ENCODE measurements at regions of chr5 and their contacts with region 1.

Region 1: GRCh38 chr5:124706729-124707361 is 39.6 kb downstream of the ZNF608 start:
- DNase-seq: no peak
- ATAC-seq: no peak
- H3K4me3 ChIP-seq: peak overlapping the region; percentile 16; the same call in 1 of the 2 replicates
- H3K27ac ChIP-seq: peak overlapping the region; percentile 78
- H3K4me1 ChIP-seq: peaks cover 61% of the 10 kb centered on the region
- H3K27me3 ChIP-seq: no peaks in the 10 kb centered on the region
- CTCF ChIP-seq: no peak
- EP300 ChIP-seq: no peak
- POLR2A ChIP-seq: no peak
- RAD21 ChIP-seq: no peak

Region 2: DNA sequence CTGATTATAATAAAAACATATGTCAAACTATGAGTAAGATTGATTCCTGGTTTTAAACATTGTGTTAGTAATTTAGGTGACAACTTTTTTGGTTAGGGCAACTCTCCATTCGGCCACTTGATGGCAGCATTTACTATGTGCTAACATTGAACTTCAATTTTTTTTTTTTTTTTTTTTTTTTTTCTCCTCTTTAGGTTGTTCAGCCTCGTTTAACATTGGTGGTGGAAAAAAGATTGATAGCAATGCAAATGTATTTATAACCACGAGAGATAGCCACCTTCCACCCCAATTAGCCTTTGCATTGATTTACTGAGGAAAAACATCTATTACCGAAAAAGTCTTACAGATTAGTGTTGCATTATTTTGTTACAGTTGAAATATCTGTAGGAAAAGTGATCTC is 1035.8 kb before region 1 on chr5:
- CTCF ChIA-PET with region 1: no interaction called
- POLR2A ChIA-PET with region 1: no interaction called
- RAD21 ChIA-PET with region 1: no interaction called
- SMC1A ChIA-PET with region 1: no interaction called
- in situ Hi-C with region 1: loop called (anchors 25 kb)
- intact Hi-C with region 1: no loop called
- DNase-seq: no peak
- ATAC-seq: peak; percentile 27; the same call in 2 of the 3 replicates
- H3K4me3 ChIP-seq: no peak overlapping the region
- H3K27ac ChIP-seq: no peak overlapping the region
- H3K4me1 ChIP-seq: no peaks in the 10 kb centered on the region
- H3K27me3 ChIP-seq: no peaks in the 10 kb centered on the region
- CTCF ChIP-seq: peak; percentile 71 to 74 (median 72)
- EP300 ChIP-seq: no peak
- POLR2A ChIP-seq: no peak
- RAD21 ChIP-seq: peak; percentile 89

Region 3: DNA sequence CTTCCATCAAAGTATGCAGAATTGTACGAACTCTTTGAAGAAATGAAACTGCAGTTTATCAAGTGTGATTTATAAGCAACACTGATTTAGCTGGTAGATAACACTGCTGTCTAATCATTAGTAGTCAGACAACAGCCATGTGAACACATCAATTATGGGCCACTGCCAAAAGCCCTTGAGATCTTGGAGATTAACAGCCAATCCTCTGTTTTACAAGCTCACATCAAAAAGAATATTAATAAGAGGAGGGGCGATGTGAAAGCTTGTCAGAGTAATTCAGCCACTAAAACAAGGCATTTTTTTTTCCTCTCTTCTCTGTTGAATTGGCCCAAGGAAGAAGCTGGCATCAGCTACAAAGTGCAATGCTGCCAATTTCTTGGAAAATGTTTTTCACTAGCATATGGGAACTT is 11.5 kb after region 1 on chr5:
- CTCF ChIA-PET with region 1: interaction called, 3 read pairs
- POLR2A ChIA-PET with region 1: interaction called, 3 read pairs
- RAD21 ChIA-PET with region 1: interaction called, 6 read pairs
- SMC1A ChIA-PET with region 1: interaction called, 42 read pairs
- in situ Hi-C with region 1: no loop called
- intact Hi-C with region 1: no loop called
- DNase-seq: no peak
- ATAC-seq: no peak
- H3K4me3 ChIP-seq: no peak overlapping the region
- H3K27ac ChIP-seq: no peak overlapping the region
- H3K4me1 ChIP-seq: no peaks in the 10 kb centered on the region
- H3K27me3 ChIP-seq: no peaks in the 10 kb centered on the region
- CTCF ChIP-seq: no peak
- EP300 ChIP-seq: no peak
- POLR2A ChIP-seq: no peak
- RAD21 ChIP-seq: no peak

Region 4: DNA sequence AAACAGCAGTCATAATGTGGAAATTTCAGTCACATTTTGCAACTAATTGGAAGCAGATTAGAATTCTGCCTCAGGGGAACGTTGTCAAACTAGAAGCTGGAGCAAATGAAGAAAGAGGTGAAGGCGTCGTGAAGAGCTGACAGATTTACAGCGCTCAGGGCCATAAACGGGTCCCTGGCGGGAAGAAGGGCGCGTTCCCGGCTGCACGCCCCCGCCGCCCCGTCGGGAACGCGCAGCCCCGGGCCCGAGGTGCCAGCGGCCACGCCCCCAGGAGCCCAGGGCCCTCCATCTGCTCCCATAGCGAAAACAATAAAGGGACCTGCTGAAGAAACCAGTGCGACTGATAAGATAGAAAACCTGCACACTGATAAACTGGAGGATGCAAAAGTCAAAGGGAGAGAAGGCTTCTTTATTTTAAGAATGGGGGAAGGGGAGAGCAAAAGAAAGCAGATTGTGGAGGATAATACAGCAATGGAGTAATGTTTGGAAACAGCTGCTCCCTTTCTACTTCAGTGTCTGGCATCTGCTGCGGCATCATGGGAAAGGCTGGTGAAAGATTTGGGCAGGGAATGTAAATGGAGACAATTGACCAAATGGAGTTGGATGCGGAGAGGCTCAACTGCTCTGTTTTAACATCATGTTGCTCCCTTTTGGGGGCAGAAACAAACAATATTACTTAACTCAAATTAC is 28.5 kb after region 1 on chr5:
- CTCF ChIA-PET with region 1: interaction called, 13 read pairs
- POLR2A ChIA-PET with region 1: interaction called, 6 read pairs
- RAD21 ChIA-PET with region 1: interaction called, 42 read pairs
- SMC1A ChIA-PET with region 1: interaction called, 13 read pairs
- in situ Hi-C with region 1: no loop called
- intact Hi-C with region 1: no loop called
- DNase-seq: no peak
- ATAC-seq: no peak
- H3K4me3 ChIP-seq: peak overlapping the region; percentile 9; the same call in 1 of the 2 replicates
- H3K27ac ChIP-seq: no peak overlapping the region
- H3K4me1 ChIP-seq: peaks cover 9% of the 10 kb centered on the region
- H3K27me3 ChIP-seq: no peaks in the 10 kb centered on the region
- CTCF ChIP-seq: no peak
- EP300 ChIP-seq: no peak
- POLR2A ChIP-seq: no peak
- RAD21 ChIP-seq: no peak

Region 5: GRCh38 chr5:124773315-124774311 is 66.8 kb after region 1 on chr5:
- CTCF ChIA-PET with region 1: no interaction called
- POLR2A ChIA-PET with region 1: no interaction called
- RAD21 ChIA-PET with region 1: no interaction called
- SMC1A ChIA-PET with region 1: no interaction called
- in situ Hi-C with region 1: no loop called
- intact Hi-C with region 1: no loop called
- DNase-seq: no peak
- ATAC-seq: no peak
- H3K4me3 ChIP-seq: no peak overlapping the region
- H3K27ac ChIP-seq: no peak overlapping the region
- H3K4me1 ChIP-seq: no peaks in the 10 kb centered on the region
- H3K27me3 ChIP-seq: no peaks in the 10 kb centered on the region
- CTCF ChIP-seq: no peak
- EP300 ChIP-seq: no peak
- POLR2A ChIP-seq: no peak
- RAD21 ChIP-seq: no peak

Region 6: DNA sequence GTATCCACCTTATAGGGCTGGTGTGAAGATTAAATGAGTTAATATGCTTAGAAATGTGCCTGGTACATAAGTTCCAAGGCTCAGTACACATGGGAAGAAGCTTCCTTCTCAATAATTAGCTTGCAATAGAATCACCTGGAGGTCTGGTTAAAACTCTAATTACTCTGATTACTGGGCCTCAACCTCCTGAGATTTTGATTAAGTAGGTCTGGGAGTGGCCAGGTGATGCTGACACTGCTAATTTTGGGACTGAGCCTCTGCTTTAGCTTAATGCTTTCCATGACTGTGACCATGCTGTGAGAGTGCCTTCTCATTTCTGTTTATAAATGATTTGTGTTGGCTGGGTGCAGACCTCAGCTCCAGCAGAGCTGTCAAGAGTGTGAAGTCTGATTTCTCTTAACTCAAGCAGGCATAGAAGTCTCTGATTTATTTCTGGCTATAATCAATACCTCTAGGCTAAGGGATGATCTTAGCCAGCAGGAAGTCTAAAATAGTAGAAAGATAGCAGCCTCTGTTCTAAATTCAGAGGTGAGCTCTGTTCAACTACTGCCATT is 124.9 kb after region 1 on chr5:
- CTCF ChIA-PET with region 1: no interaction called
- POLR2A ChIA-PET with region 1: no interaction called
- RAD21 ChIA-PET with region 1: no interaction called
- SMC1A ChIA-PET with region 1: no interaction called
- in situ Hi-C with region 1: no loop called
- intact Hi-C with region 1: no loop called
- DNase-seq: no peak
- ATAC-seq: no peak
- H3K4me3 ChIP-seq: no peak overlapping the region
- H3K27ac ChIP-seq: no peak overlapping the region
- H3K4me1 ChIP-seq: no peaks in the 10 kb centered on the region
- H3K27me3 ChIP-seq: no peaks in the 10 kb centered on the region
- CTCF ChIP-seq: no peak
- EP300 ChIP-seq: no peak
- POLR2A ChIP-seq: no peak
- RAD21 ChIP-seq: no peak

Region 7: GRCh38 chr5:124849774-124850173 is 142.9 kb after region 1 on chr5:
- CTCF ChIA-PET with region 1: no interaction called
- POLR2A ChIA-PET with region 1: no interaction called
- RAD21 ChIA-PET with region 1: no interaction called
- SMC1A ChIA-PET with region 1: no interaction called
- in situ Hi-C with region 1: no loop called
- intact Hi-C with region 1: no loop called
- DNase-seq: no peak
- ATAC-seq: no peak
- H3K4me3 ChIP-seq: no peak overlapping the region
- H3K27ac ChIP-seq: no peak overlapping the region
- H3K4me1 ChIP-seq: no peaks in the 10 kb centered on the region
- H3K27me3 ChIP-seq: no peaks in the 10 kb centered on the region
- CTCF ChIP-seq: no peak
- EP300 ChIP-seq: no peak
- POLR2A ChIP-seq: no peak
- RAD21 ChIP-seq: no peak

Region 8: DNA sequence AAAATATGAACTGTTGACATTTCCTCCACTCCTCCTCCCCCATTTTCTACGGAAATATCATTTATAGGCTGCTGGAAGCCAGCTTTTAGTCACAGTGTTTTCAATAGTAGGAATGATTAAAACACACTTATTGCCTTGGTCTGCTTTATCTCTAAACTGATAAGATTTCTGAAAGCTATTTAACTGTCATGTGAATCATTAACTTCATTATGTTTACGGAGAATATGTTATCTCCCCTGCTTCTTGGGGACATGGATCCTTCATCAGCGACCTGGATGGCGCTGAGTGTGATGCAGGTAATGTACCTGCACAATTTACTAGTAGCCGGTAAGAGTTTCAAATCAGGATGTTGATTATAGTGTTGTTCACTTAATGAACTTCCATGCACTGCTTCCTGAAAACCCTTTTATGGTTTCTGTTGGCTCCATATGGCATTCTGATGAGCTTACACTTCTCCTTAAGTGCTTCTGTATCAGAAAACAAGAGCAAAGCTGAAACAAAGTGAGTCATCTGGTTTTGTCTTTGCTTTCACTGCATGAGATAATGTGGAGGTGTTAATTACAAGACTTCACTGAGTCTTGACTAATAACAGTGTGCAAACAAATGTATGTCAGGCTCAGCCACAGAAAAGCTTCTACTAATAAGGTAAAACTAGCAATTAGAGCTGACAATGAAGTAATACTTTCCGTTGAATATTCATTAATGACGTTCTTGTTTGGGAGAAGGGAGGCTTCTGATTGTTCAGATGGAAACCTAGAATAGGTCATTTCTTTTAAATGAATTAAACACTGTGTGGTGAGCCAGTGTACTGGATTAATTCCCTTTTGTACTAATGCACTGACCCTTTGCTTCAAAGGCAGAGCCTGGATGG is 202.0 kb after region 1 on chr5:
- CTCF ChIA-PET with region 1: interaction called, 3 read pairs
- POLR2A ChIA-PET with region 1: no interaction called
- RAD21 ChIA-PET with region 1: interaction called, 11 read pairs
- SMC1A ChIA-PET with region 1: interaction called, 7 read pairs
- in situ Hi-C with region 1: no loop called
- intact Hi-C with region 1: no loop called
- DNase-seq: peak; percentile 75
- ATAC-seq: peak; percentile 88
- H3K4me3 ChIP-seq: no peak overlapping the region
- H3K27ac ChIP-seq: peak overlapping the region; percentile 51
- H3K4me1 ChIP-seq: peaks cover 41% of the 10 kb centered on the region
- H3K27me3 ChIP-seq: no peaks in the 10 kb centered on the region
- CTCF ChIP-seq: no peak
- EP300 ChIP-seq: peak; percentile 96 to 98
- POLR2A ChIP-seq: no peak
- RAD21 ChIP-seq: peak; percentile 20; the same call in 1 of the 2 replicates

Region 9: DNA sequence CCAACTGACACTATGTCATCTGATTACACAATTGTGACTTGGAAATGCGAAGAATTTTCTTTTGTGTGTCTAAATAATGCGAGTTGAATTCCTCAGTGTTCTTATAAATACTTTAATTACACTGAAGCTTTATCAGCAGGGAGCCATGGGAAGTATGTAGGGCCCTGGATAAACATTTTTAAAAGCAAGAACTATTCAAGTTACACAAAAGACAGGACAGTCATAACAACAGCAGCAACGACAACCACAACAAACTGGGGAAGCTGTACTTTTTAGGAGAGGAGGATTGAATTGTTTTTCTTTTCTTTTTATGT is 289.9 kb after region 1 on chr5:
- CTCF ChIA-PET with region 1: no interaction called
- POLR2A ChIA-PET with region 1: no interaction called
- RAD21 ChIA-PET with region 1: no interaction called
- SMC1A ChIA-PET with region 1: no interaction called
- in situ Hi-C with region 1: no loop called
- intact Hi-C with region 1: no loop called
- DNase-seq: no peak
- ATAC-seq: no peak
- H3K4me3 ChIP-seq: no peak overlapping the region
- H3K27ac ChIP-seq: no peak overlapping the region
- H3K4me1 ChIP-seq: no peaks in the 10 kb centered on the region
- H3K27me3 ChIP-seq: no peaks in the 10 kb centered on the region
- CTCF ChIP-seq: no peak
- EP300 ChIP-seq: no peak
- POLR2A ChIP-seq: no peak
- RAD21 ChIP-seq: no peak

Measured in GM12878 (cell line).